ENCODE measurements at regions of chr17 and their contacts with region 1.

Region 1: DNA sequence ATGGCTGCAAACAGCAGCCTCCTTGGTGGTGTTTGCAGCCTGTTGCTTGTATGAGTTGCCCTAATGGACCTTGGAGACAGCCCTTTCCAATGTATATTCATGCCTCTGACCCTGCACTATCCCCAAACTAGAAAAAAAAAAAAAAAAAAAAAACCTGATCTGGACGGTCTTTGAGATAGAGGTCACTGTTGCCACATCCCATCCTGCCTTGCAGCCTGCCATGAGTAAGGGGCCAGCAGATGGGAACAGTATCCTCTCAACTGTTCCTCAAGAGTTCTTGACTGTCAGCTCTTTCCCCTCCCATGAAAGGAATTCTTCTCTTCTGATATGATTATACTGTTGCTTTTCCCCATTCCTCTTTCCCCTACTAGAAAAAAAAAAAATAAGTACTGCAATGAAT is 152.4 kb downstream of the SSH2 start:
- DNase-seq: no peak
- H3K4me3 ChIP-seq: no peak overlapping the region
- H3K27ac ChIP-seq: no peak overlapping the region
- H3K27me3 ChIP-seq: no peaks in the 10 kb centered on the region
- CTCF ChIP-seq: no peak

Region 2: DNA sequence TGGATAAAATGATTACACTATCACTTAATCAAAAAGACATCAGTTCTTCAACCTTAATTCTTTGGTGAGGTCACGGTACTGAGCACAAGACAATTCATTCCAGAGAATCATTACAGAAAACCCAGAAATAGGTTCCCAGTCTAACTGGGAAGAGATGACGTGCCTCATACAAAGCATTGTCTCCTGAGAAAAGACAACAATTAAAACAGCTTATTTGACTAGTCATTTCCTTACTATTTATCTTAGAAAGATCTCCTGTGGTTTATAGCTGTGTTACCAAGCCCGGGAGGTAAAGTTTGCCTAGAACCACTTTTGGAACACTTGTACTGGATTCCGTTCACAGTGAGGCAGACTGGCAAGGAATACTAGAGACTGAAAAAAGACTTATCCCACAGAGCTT is 831.4 kb before region 1 on chr17:
- CTCF ChIA-PET with region 1: no interaction called
- POLR2A ChIA-PET with region 1: no interaction called
- DNase-seq: no peak
- H3K4me3 ChIP-seq: no peak overlapping the region
- H3K27ac ChIP-seq: no peak overlapping the region
- H3K27me3 ChIP-seq: no peaks in the 10 kb centered on the region
- CTCF ChIP-seq: no peak

Region 3: DNA sequence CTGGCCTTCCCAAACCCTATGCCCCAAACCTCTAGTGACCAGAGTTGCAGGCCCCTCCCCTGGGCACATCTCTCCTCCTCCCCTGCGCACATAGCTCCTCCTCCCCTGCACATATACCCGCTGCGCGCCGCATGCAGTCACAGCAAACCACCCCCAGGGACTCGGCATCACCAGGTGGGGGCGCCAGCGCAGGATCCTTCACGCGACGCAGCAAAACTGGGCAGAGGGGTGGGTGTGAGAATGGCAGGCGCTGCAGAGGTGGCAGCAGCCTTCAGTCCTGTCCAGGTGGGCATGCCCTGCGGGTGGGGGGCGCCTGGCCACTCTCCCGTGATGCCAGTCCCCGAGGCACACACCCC is 160.6 kb before region 1 on chr17:
- CTCF ChIA-PET with region 1: interaction called, 47 read pairs
- POLR2A ChIA-PET with region 1: interaction called, 3 read pairs
- DNase-seq: no peak
- H3K4me3 ChIP-seq: no peak overlapping the region
- H3K27ac ChIP-seq: no peak overlapping the region
- H3K27me3 ChIP-seq: no peaks in the 10 kb centered on the region
- CTCF ChIP-seq: peak; percentile 65

Region 4: GRCh38 chr17:29640413-29640812 is 137.2 kb before region 1 on chr17:
- CTCF ChIA-PET with region 1: interaction called, 64 read pairs
- POLR2A ChIA-PET with region 1: interaction called, 4 read pairs
- DNase-seq: peak; percentile 27
- H3K4me3 ChIP-seq: no peak overlapping the region
- H3K27ac ChIP-seq: peak overlapping the region; percentile 68
- H3K27me3 ChIP-seq: no peaks in the 10 kb centered on the region
- CTCF ChIP-seq: no peak

Region 5: GRCh38 chr17:29653995-29654714 is 123.5 kb before region 1 on chr17:
- CTCF ChIA-PET with region 1: interaction called, 12 read pairs
- POLR2A ChIA-PET with region 1: no interaction called
- DNase-seq: no peak
- H3K4me3 ChIP-seq: no peak overlapping the region
- H3K27ac ChIP-seq: no peak overlapping the region
- H3K27me3 ChIP-seq: no peaks in the 10 kb centered on the region
- CTCF ChIP-seq: no peak

Measured in AG04450 (cell line).